ENCODE measurements at regions of chr1 and their contacts with region 1.

Region 1: DNA sequence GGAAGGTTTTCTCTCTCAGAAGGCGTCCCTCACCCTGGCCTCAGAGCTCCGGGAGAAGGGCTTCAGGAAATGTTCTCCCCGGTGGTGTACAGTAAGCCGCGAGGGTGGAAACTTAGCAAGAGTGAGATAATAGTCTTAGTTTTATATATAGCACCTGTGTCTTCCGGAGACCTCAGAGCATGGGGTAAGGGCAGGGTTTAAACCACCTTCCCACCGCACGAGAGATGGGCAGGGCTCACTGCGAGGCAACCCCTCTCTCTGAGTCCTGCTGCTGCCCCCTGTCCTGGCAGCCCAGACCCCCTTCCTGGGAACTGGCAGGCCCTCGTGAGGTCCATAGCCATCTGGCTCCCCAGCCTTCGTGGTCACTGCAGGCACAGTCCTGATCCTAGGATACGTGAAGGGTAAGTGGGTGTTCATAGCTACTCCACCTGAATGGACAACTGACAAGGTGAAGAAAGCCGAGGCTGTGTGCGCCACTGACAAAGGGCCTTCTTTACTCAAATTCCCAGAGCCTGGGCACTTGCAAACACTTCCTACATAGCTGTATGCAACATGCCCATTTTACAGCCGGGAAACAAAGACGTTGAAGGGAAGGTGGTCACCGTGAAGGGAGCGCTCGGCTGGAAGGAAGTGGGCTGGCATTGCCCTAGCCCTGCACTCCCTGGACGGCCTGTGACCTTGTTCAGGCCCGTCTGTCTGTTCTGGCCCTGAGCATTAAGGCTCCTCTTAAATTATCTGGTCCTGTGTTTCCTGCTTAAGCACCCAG is 26.9 kb downstream of the ITPKB start:
- DNase-seq: peak; percentile 81
- H3K4me3 Mint-ChIP-seq: peak overlapping the region; percentile 57
- H3K27ac Mint-ChIP-seq: peak overlapping the region; percentile 85
- H3K4me1 Mint-ChIP-seq: peaks cover 94% of the 10 kb centered on the region
- H3K27me3 Mint-ChIP-seq: no peaks in the 10 kb centered on the region

Region 2: GRCh38 chr1:226596531-226597165 is 115.5 kb before region 1 on chr1:
- CTCF ChIA-PET with region 1: no interaction called
- POLR2A ChIA-PET with region 1: no interaction called
- intact Hi-C with region 1: no loop called
- DNase-seq: no peak
- H3K4me3 Mint-ChIP-seq: no peak overlapping the region
- H3K27ac Mint-ChIP-seq: no peak overlapping the region
- H3K4me1 Mint-ChIP-seq: no peaks in the 10 kb centered on the region
- H3K27me3 Mint-ChIP-seq: peaks cover 7% of the 10 kb centered on the region

Region 3: DNA sequence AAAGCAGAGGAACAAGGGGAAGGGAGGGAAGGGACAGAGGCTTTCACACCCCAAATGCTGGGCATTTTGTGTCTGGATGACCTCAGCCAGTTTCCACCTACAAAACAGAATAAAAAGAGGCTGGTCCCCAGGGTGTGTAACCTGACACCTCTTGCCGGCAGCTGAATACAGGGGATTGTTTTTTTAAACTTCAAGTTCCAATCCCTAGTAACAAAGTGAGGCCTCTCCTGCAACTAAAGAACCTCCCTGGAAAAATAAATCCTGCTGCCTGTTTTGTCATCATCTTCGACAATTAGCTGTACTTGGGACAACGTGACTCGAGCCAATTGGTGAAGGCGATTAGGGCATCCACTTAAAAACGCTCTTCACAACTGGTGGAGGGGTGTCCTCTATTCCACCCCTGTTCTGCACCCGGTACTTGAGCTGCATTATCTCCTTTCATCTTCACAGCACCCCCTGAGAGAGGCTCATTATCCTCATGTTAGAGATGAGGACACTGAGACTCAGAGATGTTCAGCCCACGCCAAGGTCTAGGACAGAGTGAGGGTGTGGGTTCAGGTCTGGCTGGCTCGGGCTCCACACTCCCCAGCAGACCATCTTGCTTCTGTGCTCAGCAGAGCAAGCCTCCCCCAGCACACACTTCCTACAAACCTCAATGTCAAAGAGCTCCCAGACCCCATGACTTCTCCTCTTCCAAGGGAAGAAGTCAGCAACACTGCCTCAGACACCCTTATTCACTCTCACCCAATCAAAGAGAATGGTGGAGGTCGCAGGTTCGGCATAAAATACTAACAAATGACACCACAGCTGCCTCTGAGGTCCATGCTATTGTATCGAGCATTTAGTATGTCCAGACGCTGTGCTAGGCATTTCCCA is 11.7 kb after region 1 on chr1:
- CTCF ChIA-PET with region 1: interaction called, 6 read pairs
- POLR2A ChIA-PET with region 1: interaction called, 7 read pairs
- intact Hi-C with region 1: loop called (anchors 1 kb)
- DNase-seq: no peak
- H3K4me3 Mint-ChIP-seq: peak overlapping the region; percentile 77
- H3K27ac Mint-ChIP-seq: peak overlapping the region; percentile 87
- H3K4me1 Mint-ChIP-seq: peaks cover 88% of the 10 kb centered on the region
- H3K27me3 Mint-ChIP-seq: no peaks in the 10 kb centered on the region

Region 4: GRCh38 chr1:226903819-226904716 is 191.9 kb after region 1 on chr1:
- CTCF ChIA-PET with region 1: no interaction called
- POLR2A ChIA-PET with region 1: no interaction called
- intact Hi-C with region 1: no loop called
- DNase-seq: no peak
- H3K4me3 Mint-ChIP-seq: no peak overlapping the region
- H3K27ac Mint-ChIP-seq: no peak overlapping the region
- H3K4me1 Mint-ChIP-seq: no peaks in the 10 kb centered on the region
- H3K27me3 Mint-ChIP-seq: no peaks in the 10 kb centered on the region

Measured in activated CD4-positive, alpha-beta memory T cell treated with anti-CD3 and anti-CD28 coated beads for 36 hours (primary cell).